Activated B cell treated with CpG ODN at 0.5 μM for 24 hours (primary cell): ENCODE measurements at regions of chr2 and their contacts with region 1.

Region 1: GRCh38 chr2:12005886-12006681 is 259.7 kb downstream of the LPIN1 start:
- DNase-seq: no peak
- ATAC-seq: peak; percentile 77
- H3K4me3 Mint-ChIP-seq: peak overlapping the region; percentile 46
- H3K27ac Mint-ChIP-seq: peak overlapping the region; percentile 56
- H3K4me1 Mint-ChIP-seq: peaks cover 57% of the 10 kb centered on the region
- H3K27me3 Mint-ChIP-seq: no peaks in the 10 kb centered on the region
- CTCF ChIP-seq: no peak

Region 2: DNA sequence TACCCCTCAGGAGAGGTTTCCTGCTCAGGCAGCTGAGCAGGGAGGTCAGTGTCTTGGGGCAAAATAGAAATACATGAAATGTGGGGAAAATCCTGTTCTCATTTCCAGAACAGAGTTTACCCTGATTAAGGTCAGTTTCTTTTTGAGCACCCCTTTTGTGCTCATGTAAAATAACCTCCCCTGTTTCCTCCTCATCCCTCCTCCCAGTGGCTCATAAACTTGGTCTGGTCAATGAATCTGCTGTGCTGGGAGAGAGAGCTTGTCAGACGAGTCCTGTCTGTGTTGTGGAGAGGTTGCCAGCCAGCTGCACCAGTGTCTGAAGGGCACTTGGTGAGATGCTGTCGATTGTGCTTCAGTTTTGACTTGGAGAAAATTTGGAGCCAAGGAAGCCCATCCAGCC is 384.7 kb before region 1 on chr2:
- CTCF ChIA-PET with region 1: no interaction called
- POLR2A ChIA-PET with region 1: no interaction called
- intact Hi-C with region 1: no loop called
- DNase-seq: no peak
- ATAC-seq: no peak
- H3K4me3 Mint-ChIP-seq: no peak overlapping the region
- H3K27ac Mint-ChIP-seq: no peak overlapping the region
- H3K4me1 Mint-ChIP-seq: no peaks in the 10 kb centered on the region
- H3K27me3 Mint-ChIP-seq: no peaks in the 10 kb centered on the region
- CTCF ChIP-seq: no peak

Region 3: DNA sequence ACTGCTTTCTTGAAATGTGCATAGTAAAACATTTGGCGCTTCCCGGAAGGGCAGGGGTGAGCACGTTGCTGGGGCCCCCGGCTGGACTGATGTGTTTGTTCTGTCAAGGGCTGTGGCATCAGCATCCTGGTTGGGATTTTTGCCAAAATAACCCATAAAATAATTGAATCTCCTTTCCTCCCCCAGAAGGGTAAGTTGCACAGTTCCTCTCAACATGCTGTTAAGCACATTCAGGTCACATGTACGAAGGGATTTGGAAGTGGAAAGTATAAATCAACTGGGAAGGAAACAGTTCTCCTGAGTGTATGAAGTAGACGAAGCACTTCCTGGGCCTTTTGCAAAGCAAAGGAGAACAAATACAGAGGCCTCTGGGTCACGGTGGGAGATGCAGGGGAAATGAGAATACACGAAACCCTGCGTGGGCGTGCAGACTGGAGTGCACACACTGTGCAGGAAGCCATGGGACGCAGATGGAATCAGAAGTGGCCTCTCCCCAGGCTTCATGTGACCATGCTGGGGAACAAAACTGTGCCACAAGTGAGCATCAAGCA is 75.8 kb before region 1 on chr2:
- CTCF ChIA-PET with region 1: no interaction called
- POLR2A ChIA-PET with region 1: no interaction called
- intact Hi-C with region 1: loop called (anchors 5 kb)
- DNase-seq: no peak
- ATAC-seq: no peak
- H3K4me3 Mint-ChIP-seq: no peak overlapping the region
- H3K27ac Mint-ChIP-seq: no peak overlapping the region
- H3K4me1 Mint-ChIP-seq: peaks cover 28% of the 10 kb centered on the region
- H3K27me3 Mint-ChIP-seq: no peaks in the 10 kb centered on the region
- CTCF ChIP-seq: no peak

Region 4: GRCh38 chr2:12071318-12071717 is 65.2 kb after region 1 on chr2:
- CTCF ChIA-PET with region 1: no interaction called
- POLR2A ChIA-PET with region 1: no interaction called
- intact Hi-C with region 1: loop called (anchors 5 kb)
- DNase-seq: no peak
- ATAC-seq: peak; percentile 83
- H3K4me3 Mint-ChIP-seq: peak overlapping the region; percentile 11
- H3K27ac Mint-ChIP-seq: peak overlapping the region; percentile 61
- H3K4me1 Mint-ChIP-seq: peaks cover 63% of the 10 kb centered on the region
- H3K27me3 Mint-ChIP-seq: no peaks in the 10 kb centered on the region
- CTCF ChIP-seq: no peak